ENCODE measurements at regions of chr4 and their contacts with region 1.

Region 1: GRCh38 chr4:122922877-122923511 is 597 bp upstream of the NUDT6 start:
- DNase-seq: peak; percentile 68 to 69
- ATAC-seq: peak; percentile 91 to 95
- H3K4me3 ChIP-seq: peak overlapping the region; percentile 86 to 94 (median 92)
- H3K27ac ChIP-seq: peak overlapping the region; percentile 77 to 83 (median 81)
- H3K4me1 ChIP-seq: peaks cover 13 to 24% of the 10 kb centered on the region in 2 donors
- H3K27me3 ChIP-seq: no peaks in the 10 kb centered on the region
- CTCF ChIP-seq: no peak
- POLR2A ChIP-seq: no peak

Region 2: GRCh38 chr4:122732329-122733026 is 190.5 kb before region 1 on chr4 and contains the start of gene BBS12:
- in situ Hi-C with region 1: no loop called
- intact Hi-C with region 1: loop called (anchors 1 kb)
- DNase-seq: peak; percentile 97 to 98
- ATAC-seq: peak; percentile 100
- H3K4me3 ChIP-seq: peak within 1 kb of the TSS; percentile 72 to 96 (median 81)
- H3K27ac ChIP-seq: peak within 1 kb of the TSS; percentile 73 to 82 (median 77)
- H3K4me1 ChIP-seq: peaks cover 7 to 13% of the 10 kb centered on the region in 2 donors
- H3K27me3 ChIP-seq: no peaks in the 10 kb centered on the region
- CTCF ChIP-seq: peak in 2 of 5 experiments; percentile 18 to 33
- POLR2A ChIP-seq: peak in 1 of 2 donors; percentile 23
- total RNA-seq, gene BBS12: 0.61 to 1.9 (median 1.3) TPM

Region 3: DNA sequence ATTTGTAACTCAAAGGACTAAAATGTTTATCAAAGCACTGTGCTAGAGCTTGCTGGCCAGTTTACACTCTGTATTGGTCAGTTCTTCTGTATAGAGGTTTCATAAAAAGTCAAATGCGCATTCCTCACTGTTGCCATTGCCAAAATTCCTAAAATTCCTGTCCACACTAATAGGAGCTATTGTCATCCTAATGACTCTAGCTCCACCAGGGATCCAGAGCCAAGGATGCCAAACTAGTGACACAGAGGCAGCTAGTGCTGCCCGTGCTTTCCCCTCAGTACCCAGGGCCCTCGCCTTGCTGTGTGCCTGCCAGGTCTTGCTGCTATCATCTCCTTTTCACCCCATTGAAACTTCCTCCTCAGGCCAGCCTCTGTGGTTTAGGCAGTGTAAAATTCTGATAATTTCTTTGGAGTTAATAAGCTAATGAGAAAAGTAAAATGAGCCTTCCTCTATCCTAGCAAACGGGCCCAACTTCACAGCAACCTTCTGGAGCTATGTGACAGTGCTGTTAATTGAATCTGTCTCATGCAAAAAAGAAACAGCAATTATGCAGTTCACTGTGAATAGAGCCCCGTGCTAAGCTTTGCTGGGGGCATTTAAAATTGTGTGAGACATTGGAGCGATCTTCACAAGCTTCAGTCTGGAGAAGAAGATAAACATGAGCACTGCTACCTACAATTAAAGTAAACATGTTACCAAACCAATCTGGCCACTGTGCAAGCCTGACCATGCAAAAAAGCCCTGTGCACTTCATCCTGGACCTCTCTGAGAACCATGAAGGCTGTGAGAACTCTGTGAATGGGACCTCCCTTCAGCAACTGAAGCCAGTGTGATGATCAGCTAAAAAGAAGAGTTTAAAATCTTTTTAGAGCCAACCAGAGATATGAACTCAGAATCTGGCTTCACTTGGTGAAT is 139.4 kb before region 1 on chr4:
- in situ Hi-C with region 1: no loop called
- intact Hi-C with region 1: no loop called
- DNase-seq: peak in 1 of 2 donors; percentile 23
- ATAC-seq: peak; percentile 47 to 68
- H3K4me3 ChIP-seq: no peak overlapping the region
- H3K27ac ChIP-seq: peak overlapping the region in 1 of 4 donors; percentile 7
- H3K4me1 ChIP-seq: no peaks in the 10 kb centered on the region
- H3K27me3 ChIP-seq: no peaks in the 10 kb centered on the region
- CTCF ChIP-seq: no peak
- POLR2A ChIP-seq: no peak

Region 4: DNA sequence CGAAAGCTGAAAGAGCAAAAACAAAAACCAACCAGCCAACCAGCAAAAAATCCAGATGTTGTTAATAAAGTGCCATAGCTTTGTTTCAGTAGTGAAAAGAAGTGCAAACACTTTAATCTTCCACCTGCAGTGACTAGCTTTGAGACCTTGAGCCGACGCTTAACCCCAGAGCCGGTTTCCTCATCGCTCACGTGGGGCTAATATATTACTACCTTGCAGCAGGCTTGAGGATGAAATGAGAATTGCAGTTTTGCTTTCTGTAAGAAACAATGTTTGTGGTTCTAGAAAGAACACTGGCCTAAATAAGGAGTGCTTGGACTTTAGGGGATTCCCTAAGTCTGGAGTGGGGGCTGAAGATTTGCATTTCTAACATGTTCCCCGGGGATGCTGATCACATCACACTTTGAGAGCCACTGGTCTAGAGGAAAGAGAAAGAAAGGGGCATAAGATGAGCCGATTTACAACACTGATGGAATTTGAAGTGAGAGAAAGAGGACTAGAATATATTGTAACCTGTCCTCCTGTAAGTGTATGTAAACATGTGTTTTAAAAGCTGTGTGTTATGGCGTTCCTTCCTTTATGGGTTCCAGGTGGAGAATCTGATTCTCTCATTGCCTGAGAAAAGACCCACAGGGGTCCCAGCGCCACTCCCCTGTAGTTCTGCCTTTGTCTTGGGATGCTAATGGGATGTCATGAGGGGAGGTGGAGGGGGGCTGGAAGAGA is 95.0 kb before region 1 on chr4:
- in situ Hi-C with region 1: no loop called
- intact Hi-C with region 1: loop called (anchors 5 kb)
- DNase-seq: no peak
- ATAC-seq: peak in 1 of 2 donors; percentile 50
- H3K4me3 ChIP-seq: peak overlapping the region; percentile 68 to 78 (median 71)
- H3K27ac ChIP-seq: peak overlapping the region; percentile 61 to 76 (median 72)
- H3K4me1 ChIP-seq: peaks cover 5 to 8% of the 10 kb centered on the region in 2 donors
- H3K27me3 ChIP-seq: peaks cover 22 to 35% (median 31%) of the 10 kb centered on the region in 3 donors
- CTCF ChIP-seq: no peak
- POLR2A ChIP-seq: no peak

Region 5: DNA sequence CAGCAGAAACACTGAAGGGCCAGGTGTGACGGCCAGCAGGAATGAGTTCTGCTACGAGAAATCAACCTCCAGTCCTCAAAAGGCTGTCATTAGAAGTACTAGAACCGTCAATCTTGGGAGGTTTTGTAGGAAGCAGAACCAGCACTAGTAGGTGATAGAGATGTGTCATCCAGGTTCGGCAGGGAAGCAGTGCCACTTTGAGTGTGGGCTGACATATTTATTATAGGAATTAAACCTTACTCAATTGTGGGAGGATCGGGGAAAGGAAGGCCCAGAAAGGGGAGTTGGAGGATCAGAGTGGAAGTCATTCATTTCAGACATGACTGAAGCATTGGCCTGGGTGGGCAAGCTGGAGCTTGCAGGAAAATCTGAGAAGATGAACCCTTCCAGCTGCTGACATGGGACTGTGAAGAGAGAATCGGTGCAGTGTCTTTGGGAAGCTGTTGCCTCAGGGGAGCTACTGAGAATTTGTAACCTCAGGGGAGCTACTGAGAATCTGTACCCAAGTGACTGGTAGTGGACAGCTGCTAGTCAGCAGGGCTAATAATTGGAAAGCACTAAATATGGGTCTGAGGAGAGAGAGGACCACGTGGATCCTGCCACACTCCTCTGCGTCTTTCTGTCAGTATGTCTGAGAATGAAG is 651.0 kb after region 1 on chr4:
- in situ Hi-C with region 1: no loop called
- intact Hi-C with region 1: no loop called
- DNase-seq: no peak
- ATAC-seq: no peak
- H3K4me3 ChIP-seq: no peak overlapping the region
- H3K27ac ChIP-seq: no peak overlapping the region
- H3K4me1 ChIP-seq: peaks cover 0 to 3% of the 10 kb centered on the region in 2 donors
- H3K27me3 ChIP-seq: no peaks in the 10 kb centered on the region
- CTCF ChIP-seq: no peak
- POLR2A ChIP-seq: no peak